ENCODE measurements at regions of chr19 and their contacts with region 1.

Region 1: GRCh38 chr19:41397086-41398049 is at the starts of genes BCKDHA and EXOSC5:
- DNase-seq: peak; percentile 99 to 100 (median 99)
- ATAC-seq: peak; percentile 98 to 99 (median 98)
- H3K4me3 ChIP-seq: peak within 1 kb of the TSS; percentile 61 to 99 (median 90)
- H3K27ac ChIP-seq: peak within 1 kb of the TSS; percentile 83 to 98 (median 91)
- H3K4me1 ChIP-seq: peaks cover 4 to 47% (median 33%) of the 10 kb centered on the region in 12 donors
- H3K27me3 ChIP-seq: no peaks in the 10 kb centered on the region
- CTCF ChIP-seq: peak in 1 of 12 donors; percentile 8
- POLR2A ChIP-seq: peak in 1 of 2 donors; percentile 29
- total RNA-seq, gene BCKDHA: 32.0 to 149 (median 39.2) TPM
- total RNA-seq, gene EXOSC5: 9.6 to 18.6 (median 13.7) TPM

Region 2: GRCh38 chr19:41064974-41065569 is 332.3 kb before region 1 on chr19:
- intact Hi-C with region 1: no loop called
- DNase-seq: no peak
- ATAC-seq: no peak
- H3K4me3 ChIP-seq: no peak overlapping the region
- H3K27ac ChIP-seq: no peak overlapping the region
- H3K4me1 ChIP-seq: no peaks in the 10 kb centered on the region
- H3K27me3 ChIP-seq: peaks cover 0 to 21% (median 3%) of the 10 kb centered on the region in 9 donors
- CTCF ChIP-seq: no peak
- POLR2A ChIP-seq: no peak

Region 3: DNA sequence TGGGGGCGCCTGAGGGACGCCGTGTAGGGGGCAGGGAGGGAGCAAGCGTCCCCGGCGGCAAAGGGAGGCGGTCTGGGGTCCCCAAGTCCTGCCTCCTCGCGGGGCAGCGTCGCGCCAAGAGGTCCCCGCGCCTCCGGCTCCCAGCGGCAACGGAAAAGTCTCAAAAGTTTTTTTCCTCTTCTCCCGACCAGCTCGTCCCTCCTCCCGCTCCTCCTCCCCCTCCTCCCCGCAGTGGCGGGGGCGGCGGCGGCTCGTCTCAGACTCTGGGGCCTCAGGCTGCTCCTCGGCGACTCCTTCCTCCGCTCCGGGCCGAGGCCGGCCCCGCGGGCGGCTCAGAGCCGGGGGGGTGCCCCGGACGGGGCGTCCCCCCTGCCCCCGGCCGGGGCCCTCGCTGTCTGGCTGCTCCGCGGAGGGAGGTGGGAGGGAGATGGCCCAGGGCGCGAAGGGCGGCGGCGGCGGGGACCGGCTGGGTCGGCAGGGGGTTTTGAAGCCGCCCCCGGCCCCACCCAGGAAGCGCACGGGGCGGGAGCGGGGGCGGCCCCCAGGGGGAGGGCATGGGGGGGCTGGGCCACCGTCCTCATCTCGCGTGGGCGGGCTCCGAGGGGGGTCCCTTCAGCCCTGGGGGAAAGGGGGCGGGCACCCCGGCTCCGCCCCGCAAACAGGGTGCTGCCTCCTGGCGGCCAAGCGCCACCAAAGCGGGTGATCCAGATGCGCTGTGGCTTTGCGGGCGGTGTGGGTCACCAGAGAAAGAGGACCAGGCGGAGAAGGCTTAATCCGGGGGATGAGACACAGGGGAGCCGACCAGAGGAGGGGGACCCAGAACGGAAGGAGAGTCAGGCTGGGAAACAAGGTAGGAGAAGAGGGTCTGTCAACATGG is 43.7 kb before region 1 on chr19 and contains the start of gene TGFB1:
- intact Hi-C with region 1: no loop called
- DNase-seq: peak; percentile 90 to 97 (median 91)
- ATAC-seq: peak; percentile 64 to 78 (median 72)
- H3K4me3 ChIP-seq: peak within 1 kb of the TSS; percentile 52 to 98 (median 74)
- H3K27ac ChIP-seq: peak within 1 kb of the TSS; percentile 67 to 96 (median 90)
- H3K4me1 ChIP-seq: peaks cover 0 to 73% (median 25%) of the 10 kb centered on the region in 12 donors
- H3K27me3 ChIP-seq: no peaks in the 10 kb centered on the region
- CTCF ChIP-seq: peak; percentile 78 to 98 (median 90)
- POLR2A ChIP-seq: peak in 1 of 2 donors; percentile 65
- total RNA-seq, gene TGFB1: 9.4 to 68.8 (median 13.9) TPM

Region 4: DNA sequence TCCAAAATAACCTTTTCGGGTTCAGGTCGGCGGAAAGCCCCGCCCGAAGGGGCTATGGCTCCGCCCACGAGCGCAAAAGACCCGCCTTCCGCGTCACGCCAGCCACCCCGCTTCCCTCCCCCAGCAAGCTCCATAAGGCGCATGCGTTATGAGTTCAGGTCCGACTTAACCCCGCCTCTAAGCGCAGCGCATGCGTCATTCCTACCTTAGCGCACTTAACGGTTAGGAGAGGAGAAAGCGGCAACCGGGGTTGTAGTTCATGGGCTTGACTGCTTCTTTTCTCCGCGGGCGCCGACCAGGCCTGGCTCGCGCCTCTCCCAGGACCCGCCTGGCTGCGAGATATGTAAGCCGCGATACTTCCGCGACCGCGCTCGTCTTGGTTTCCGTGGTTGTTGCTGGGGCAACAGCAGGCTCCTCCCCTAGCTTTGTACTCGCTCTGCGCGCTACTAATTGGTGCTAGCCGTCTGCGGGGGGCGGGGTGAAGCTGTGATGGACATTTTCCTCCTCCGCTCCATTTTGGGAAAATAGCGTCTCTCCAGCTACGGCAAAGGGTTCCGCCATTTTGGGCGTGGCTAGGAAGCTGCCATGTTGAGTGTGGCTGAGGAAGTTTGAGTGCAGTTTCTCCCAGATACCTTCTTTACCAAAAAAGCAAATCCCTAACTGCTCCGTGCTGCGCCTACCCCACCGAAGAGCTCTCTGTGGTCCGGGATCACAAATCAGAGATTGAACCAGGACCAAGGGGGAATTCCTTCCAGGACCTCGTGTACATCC is 33.4 kb before region 1 on chr19 and contains the start of gene B9D2:
- intact Hi-C with region 1: loop called in 1 of 10 experiments (anchors 1 kb)
- DNase-seq: peak; percentile 97 to 99 (median 98)
- ATAC-seq: peak; percentile 97 to 98 (median 98)
- H3K4me3 ChIP-seq: peak within 1 kb of the TSS; percentile 64 to 91 (median 76)
- H3K27ac ChIP-seq: peak within 1 kb of the TSS; percentile 91 to 100 (median 98)
- H3K4me1 ChIP-seq: peaks cover 0 to 53% (median 9%) of the 10 kb centered on the region in 12 donors
- H3K27me3 ChIP-seq: no peaks in the 10 kb centered on the region
- CTCF ChIP-seq: no peak
- POLR2A ChIP-seq: peak in 1 of 2 donors; percentile 66
- total RNA-seq, gene B9D2: 2.0 to 5.1 (median 3.3) TPM

Region 5: GRCh38 chr19:41492843-41493242 is 95.5 kb after region 1 on chr19:
- intact Hi-C with region 1: no loop called
- DNase-seq: no peak
- ATAC-seq: no peak
- H3K4me3 ChIP-seq: no peak overlapping the region
- H3K27ac ChIP-seq: no peak overlapping the region
- H3K4me1 ChIP-seq: peaks cover 0 to 23% (median 5%) of the 10 kb centered on the region in 12 donors
- H3K27me3 ChIP-seq: peaks cover 0 to 8% (median 0%) of the 10 kb centered on the region in 9 donors
- CTCF ChIP-seq: no peak
- POLR2A ChIP-seq: no peak

Region 6: GRCh38 chr19:41505105-41505504 is 107.7 kb after region 1 on chr19:
- intact Hi-C with region 1: no loop called
- DNase-seq: no peak
- ATAC-seq: no peak
- H3K4me3 ChIP-seq: no peak overlapping the region
- H3K27ac ChIP-seq: no peak overlapping the region
- H3K4me1 ChIP-seq: peaks cover 0 to 9% (median 0%) of the 10 kb centered on the region in 12 donors
- H3K27me3 ChIP-seq: peaks cover 0 to 25% (median 0%) of the 10 kb centered on the region in 9 donors
- CTCF ChIP-seq: no peak
- POLR2A ChIP-seq: no peak